ENCODE measurements at regions of chr9 and their contacts with region 1.

Region 1: DNA sequence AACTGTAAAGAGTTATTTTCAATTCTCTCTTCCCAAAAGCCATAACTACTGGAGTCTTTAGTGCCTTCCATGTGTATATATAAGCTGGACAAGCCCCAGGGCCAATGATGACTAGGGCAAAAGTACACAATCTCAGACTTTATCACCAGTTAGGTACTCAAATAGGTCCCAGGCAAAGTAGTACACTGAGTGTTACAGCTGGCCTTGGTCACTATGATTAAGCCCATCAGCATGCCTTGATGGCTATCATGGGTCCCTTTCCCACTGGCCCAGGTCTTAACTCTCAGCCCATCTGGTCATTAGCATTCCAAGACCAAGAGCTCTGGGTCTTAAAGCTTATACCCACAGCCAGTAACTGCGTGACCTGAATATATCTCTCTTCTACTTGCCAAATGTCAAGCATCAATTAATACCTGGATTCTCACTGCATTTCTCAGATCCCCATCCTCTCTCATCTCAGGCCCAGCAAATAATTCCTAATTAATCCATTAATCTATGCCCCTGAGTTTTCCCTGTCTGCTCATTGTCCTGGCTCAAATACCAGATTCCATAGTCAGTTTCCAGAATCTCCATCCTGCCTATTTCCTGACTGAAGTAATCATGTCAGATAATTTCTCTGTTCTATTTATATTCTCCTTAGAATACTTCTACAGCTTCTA is 62.3 kb downstream of the NR6A1 start:
- DNase-seq: no peak
- ATAC-seq: no peak
- H3K4me3 ChIP-seq: no peak overlapping the region
- H3K27ac ChIP-seq: no peak overlapping the region
- H3K4me1 ChIP-seq: no peaks in the 10 kb centered on the region; the same call in 1 of the 2 replicates
- H3K27me3 ChIP-seq: no peaks in the 10 kb centered on the region
- CTCF ChIP-seq: no peak
- EP300 ChIP-seq: no peak
- POLR2A ChIP-seq: no peak
- RAD21 ChIP-seq: no peak

Region 2: DNA sequence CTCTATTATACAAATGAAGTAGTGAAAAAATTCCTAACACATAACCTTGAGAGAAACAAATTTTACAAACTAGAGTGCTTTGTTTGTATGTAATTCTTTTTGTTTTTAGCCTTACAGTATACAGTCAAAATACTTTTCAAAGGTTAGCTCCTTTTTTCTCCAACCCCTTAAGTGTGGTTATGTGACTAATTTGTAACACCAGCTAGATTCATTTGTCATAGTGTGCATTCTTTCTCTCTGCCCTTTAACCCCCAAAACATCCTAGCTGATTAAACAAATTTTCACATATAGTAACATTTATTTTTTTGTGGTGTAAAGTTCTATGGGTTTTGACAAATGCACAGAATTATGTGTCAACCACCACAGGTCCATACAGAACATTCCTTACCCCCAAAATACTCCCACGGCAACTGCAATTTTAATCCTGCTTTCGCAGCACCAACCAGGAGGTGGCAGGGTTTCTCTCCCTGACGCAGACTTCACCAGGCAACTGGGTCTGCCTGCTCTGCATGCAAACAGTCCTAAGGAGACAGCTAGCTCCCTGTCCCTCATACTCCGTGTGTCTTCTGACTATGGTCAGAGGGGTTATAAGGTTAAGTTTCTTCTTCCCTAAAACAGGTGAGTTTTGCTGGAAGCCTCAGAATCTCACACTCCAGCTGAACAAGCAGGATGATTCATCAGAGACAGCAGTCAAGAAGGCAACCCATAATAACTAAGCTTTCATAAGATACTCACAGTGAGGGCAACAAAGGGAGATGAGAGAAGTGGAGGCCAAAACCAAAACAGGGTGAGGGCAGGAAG is 157.1 kb before region 1 on chr9:
- CTCF ChIA-PET with region 1: interaction called, 39 read pairs
- POLR2A ChIA-PET with region 1: no interaction called
- RAD21 ChIA-PET with region 1: interaction called, 11 read pairs
- SMC1A ChIA-PET with region 1: interaction called, 20 read pairs
- in situ Hi-C with region 1: no loop called
- intact Hi-C with region 1: loop called (anchors 5 kb)
- DNase-seq: peak; percentile 4
- ATAC-seq: peak; percentile 71
- H3K4me3 ChIP-seq: no peak overlapping the region
- H3K27ac ChIP-seq: no peak overlapping the region
- H3K4me1 ChIP-seq: no peaks in the 10 kb centered on the region
- H3K27me3 ChIP-seq: no peaks in the 10 kb centered on the region
- CTCF ChIP-seq: peak; percentile 28 to 69 (median 61); a peak in 5 of 6 replicates
- EP300 ChIP-seq: no peak
- POLR2A ChIP-seq: no peak
- RAD21 ChIP-seq: peak; percentile 88

Region 3: DNA sequence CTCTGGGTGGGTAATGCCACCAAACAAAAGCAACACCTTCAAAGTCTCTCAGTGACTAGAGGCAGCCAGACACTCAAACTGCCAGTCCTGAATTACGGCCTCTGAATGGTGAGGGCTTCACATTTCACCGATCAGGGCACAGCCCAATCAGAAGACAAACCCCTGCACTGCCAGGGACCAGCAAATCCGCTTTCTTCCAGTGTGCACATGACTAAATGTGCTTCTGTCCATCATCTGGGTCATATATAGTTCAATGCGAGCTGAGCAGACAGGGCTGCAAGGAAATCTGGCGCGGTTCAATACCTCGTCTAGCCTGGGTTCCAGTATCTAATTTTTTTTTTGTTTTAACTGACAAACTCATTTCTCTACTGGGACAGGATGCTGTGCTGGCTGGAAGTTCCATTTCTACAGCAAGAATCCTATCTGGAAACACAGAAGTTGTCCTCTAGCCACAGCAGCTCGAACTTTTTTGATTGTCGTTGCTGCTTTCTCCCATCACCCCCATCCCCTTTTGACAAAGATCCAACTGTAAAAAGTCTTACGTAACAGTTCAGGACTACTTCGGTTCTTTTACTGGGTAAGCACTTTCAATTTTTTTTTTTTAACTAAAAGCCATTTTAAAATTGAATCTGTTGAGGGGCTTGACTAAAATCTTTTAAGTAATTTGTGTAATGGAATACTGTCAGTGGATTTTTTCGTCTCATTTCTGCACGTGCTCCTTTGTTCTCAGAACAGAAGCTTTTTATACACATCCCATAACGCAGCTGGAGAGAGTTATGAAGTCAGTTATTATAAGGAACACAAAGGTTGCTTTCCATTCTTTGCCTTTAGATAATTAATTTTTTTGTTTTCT is 50.4 kb before region 1 on chr9:
- CTCF ChIA-PET with region 1: interaction called, 83 read pairs
- POLR2A ChIA-PET with region 1: interaction called, 3 read pairs
- RAD21 ChIA-PET with region 1: interaction called, 68 read pairs
- SMC1A ChIA-PET with region 1: interaction called, 76 read pairs
- in situ Hi-C with region 1: no loop called
- intact Hi-C with region 1: loop called (anchors 2 kb)
- DNase-seq: peak; percentile 93
- ATAC-seq: peak; percentile 91
- H3K4me3 ChIP-seq: peak overlapping the region; percentile 75
- H3K27ac ChIP-seq: peak overlapping the region; percentile 96
- H3K4me1 ChIP-seq: 0 out of 2 replicates have a peak, but pooled peaks cover 3% of the 10 kb centered on the region
- H3K27me3 ChIP-seq: no peaks in the 10 kb centered on the region
- CTCF ChIP-seq: no peak
- EP300 ChIP-seq: no peak
- POLR2A ChIP-seq: peak; percentile 95
- RAD21 ChIP-seq: no peak

Region 4: DNA sequence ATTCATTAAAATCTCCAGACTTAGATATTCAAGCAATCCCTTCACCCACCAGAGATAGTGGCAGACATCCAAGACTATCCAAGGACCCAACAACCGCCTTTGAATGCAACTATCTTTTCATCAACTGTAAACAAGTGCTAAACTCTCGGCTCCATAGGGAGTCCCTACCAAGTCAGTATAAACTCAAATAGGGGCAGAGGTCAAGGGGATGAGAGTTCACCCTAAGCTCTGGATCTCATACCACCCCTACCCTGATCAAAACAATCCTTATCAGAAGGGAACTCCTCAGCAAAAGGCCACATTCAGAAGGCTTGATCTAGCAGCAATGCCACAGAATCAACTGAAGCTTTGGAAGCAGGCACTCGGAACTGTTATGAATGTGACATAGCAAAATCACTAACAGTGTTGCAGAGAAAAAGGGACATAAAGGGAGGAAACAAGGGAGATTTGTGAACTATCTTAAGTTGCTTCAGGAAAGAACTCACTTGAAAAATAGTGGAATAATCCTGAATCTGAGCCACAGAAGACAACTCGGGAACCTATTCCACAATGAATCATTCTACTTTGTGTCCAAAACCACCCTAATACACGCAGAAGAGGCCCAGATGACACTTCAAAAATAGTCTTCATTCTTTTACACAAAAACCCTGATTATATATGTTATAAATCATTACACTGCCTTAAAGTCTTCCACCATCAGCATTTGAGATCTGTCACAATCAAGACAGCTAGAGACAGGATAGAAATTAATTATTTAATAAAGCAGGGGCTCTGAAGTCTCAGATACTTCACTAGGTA is 12.5 kb after region 1 on chr9:
- CTCF ChIA-PET with region 1: interaction called, 34 read pairs
- POLR2A ChIA-PET with region 1: no interaction called
- RAD21 ChIA-PET with region 1: interaction called, 5 read pairs
- SMC1A ChIA-PET with region 1: interaction called, 23 read pairs
- in situ Hi-C with region 1: no loop called
- intact Hi-C with region 1: no loop called
- DNase-seq: no peak
- ATAC-seq: no peak
- H3K4me3 ChIP-seq: no peak overlapping the region
- H3K27ac ChIP-seq: no peak overlapping the region
- H3K4me1 ChIP-seq: no peaks in the 10 kb centered on the region
- H3K27me3 ChIP-seq: no peaks in the 10 kb centered on the region
- CTCF ChIP-seq: no peak
- EP300 ChIP-seq: no peak
- POLR2A ChIP-seq: no peak
- RAD21 ChIP-seq: no peak

Region 5: GRCh38 chr9:124771021-124771866 is 62.5 kb after region 1 on chr9 and contains the start of gene NR6A1:
- CTCF ChIA-PET with region 1: interaction called, 201 read pairs
- POLR2A ChIA-PET with region 1: interaction called, 5 read pairs
- RAD21 ChIA-PET with region 1: interaction called, 59 read pairs
- SMC1A ChIA-PET with region 1: interaction called, 105 read pairs
- in situ Hi-C with region 1: no loop called
- intact Hi-C with region 1: no loop called
- DNase-seq: peak; percentile 92
- ATAC-seq: peak; percentile 88
- H3K4me3 ChIP-seq: peak within 1 kb of the TSS; percentile 97
- H3K27ac ChIP-seq: peak within 1 kb of the TSS; percentile 86
- H3K4me1 ChIP-seq: peaks cover 21% of the 10 kb centered on the region
- H3K27me3 ChIP-seq: no peaks in the 10 kb centered on the region
- CTCF ChIP-seq: peak in 2 of 3 experiments; percentile 19 to 22; a peak in 3 of 6 replicates
- EP300 ChIP-seq: no peak
- POLR2A ChIP-seq: peak; percentile 64
- RAD21 ChIP-seq: no peak
- polyA plus RNA-seq, gene NR6A1: 1.2 to 2.5 TPM

Region 6: GRCh38 chr9:124812401-124813016 is 103.7 kb after region 1 on chr9:
- CTCF ChIA-PET with region 1: no interaction called
- POLR2A ChIA-PET with region 1: no interaction called
- RAD21 ChIA-PET with region 1: no interaction called
- SMC1A ChIA-PET with region 1: no interaction called
- in situ Hi-C with region 1: no loop called
- intact Hi-C with region 1: no loop called
- DNase-seq: no peak
- ATAC-seq: no peak; the same call in 2 of the 3 replicates
- H3K4me3 ChIP-seq: no peak overlapping the region
- H3K27ac ChIP-seq: no peak overlapping the region
- H3K4me1 ChIP-seq: no peaks in the 10 kb centered on the region
- H3K27me3 ChIP-seq: no peaks in the 10 kb centered on the region
- CTCF ChIP-seq: no peak
- EP300 ChIP-seq: no peak
- POLR2A ChIP-seq: no peak
- RAD21 ChIP-seq: no peak

Measured in GM12878 (cell line).